ENCODE measurements at regions of chr5 and their contacts with region 1.

Region 1: GRCh38 chr5:52799983-52800393 is 12.3 kb downstream of the ITGA1 start:
- DNase-seq: peak; percentile 95
- ATAC-seq: peak; percentile 91
- H3K4me3 ChIP-seq: peak overlapping the region; percentile 67 to 93 (median 89)
- H3K4me3 Mint-ChIP-seq: peak overlapping the region; percentile 95
- H3K27ac ChIP-seq: peak overlapping the region; percentile 56 to 65
- H3K27ac Mint-ChIP-seq: peak overlapping the region; percentile 93
- H3K4me1 ChIP-seq: peaks cover 23 to 25% of the 10 kb centered on the region in 2 donors
- H3K4me1 Mint-ChIP-seq: peaks cover 48% of the 10 kb centered on the region
- H3K27me3 ChIP-seq: no peaks in the 10 kb centered on the region
- H3K27me3 Mint-ChIP-seq: no peaks in the 10 kb centered on the region
- CTCF ChIP-seq: no peak

Region 2: DNA sequence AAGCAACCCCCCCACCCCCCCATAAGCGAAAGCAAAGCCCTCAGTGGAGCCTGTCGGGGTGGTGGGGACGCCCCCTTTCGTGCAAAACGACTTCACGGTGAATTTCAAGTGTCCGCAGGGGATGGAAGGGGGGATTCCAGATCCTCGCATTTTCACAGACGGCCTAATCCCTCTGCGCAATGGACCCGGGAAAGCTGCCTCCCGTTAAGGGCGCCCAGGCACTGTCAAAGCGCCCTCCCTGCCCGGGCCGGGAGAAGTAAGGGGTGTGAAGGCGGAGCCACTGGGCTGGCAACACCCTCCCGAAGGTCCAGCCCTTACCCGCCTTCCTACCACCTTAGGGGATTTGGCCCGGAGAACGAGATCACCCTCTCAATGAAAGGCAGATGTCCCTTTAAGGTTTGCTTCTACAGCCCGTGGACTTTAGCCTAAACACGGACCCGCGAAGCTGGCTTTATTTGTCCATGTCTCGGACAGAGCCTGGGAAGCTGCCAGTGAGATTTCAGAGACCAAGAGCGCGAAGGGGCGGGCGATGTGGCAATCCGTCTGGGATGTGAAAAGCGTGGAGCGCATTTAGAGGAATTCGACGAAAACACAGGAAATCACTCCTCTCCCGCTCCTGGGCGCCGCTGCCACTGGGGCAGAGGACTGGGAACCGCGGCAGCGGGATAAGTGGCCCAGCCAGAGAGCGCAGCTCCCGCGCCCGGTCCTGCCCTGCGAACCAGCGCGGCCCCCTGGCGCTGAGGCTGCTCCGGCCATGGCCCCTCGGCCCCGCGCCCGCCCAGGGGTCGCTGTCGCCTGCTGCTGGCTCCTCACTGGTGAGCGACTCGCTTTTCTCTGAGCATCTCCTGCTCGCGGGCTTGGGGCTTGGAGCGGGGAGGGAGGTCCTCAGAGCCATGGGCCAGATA is 12.1 kb before region 1 on chr5 and contains the starts of genes ITGA1 and PELO:
- CTCF ChIA-PET with region 1: interaction called, 13 read pairs
- POLR2A ChIA-PET with region 1: interaction called, 4 read pairs
- intact Hi-C with region 1: loop called (anchors 1 kb)
- DNase-seq: peak; percentile 54
- ATAC-seq: peak; percentile 76
- H3K4me3 ChIP-seq: peak within 1 kb of the TSS; percentile 41 to 79 (median 64)
- H3K4me3 Mint-ChIP-seq: peak within 1 kb of the TSS; percentile 87
- H3K27ac ChIP-seq: no peak within 1 kb of the TSS
- H3K27ac Mint-ChIP-seq: no peak within 1 kb of the TSS
- H3K4me1 ChIP-seq: peaks cover 13 to 17% of the 10 kb centered on the region in 2 donors
- H3K4me1 Mint-ChIP-seq: peaks cover 19% of the 10 kb centered on the region
- H3K27me3 ChIP-seq: peaks cover 0 to 45% (median 32%) of the 10 kb centered on the region in 4 experiments
- H3K27me3 Mint-ChIP-seq: peaks cover 46% of the 10 kb centered on the region
- CTCF ChIP-seq: peak; percentile 7
- total RNA-seq, gene ITGA1: 0.05 and 0.74 TPM in 2 replicates
- total RNA-seq, gene PELO: 5.8 and 6.4 TPM in 2 replicates

Region 3: GRCh38 chr5:53109443-53110127 is 309.6 kb after region 1 on chr5 and contains the start of gene MOCS2:
- CTCF ChIA-PET with region 1: no interaction called
- POLR2A ChIA-PET with region 1: no interaction called
- intact Hi-C with region 1: loop called (anchors 1 kb)
- DNase-seq: peak; percentile 93
- ATAC-seq: peak; percentile 96
- H3K4me3 ChIP-seq: peak within 1 kb of the TSS; percentile 65 to 84 (median 79)
- H3K4me3 Mint-ChIP-seq: peak within 1 kb of the TSS; percentile 98
- H3K27ac ChIP-seq: peak within 1 kb of the TSS; percentile 71 to 78
- H3K27ac Mint-ChIP-seq: peak within 1 kb of the TSS; percentile 92
- H3K4me1 ChIP-seq: peaks cover 9 to 11% of the 10 kb centered on the region in 2 donors
- H3K4me1 Mint-ChIP-seq: peaks cover 44% of the 10 kb centered on the region
- H3K27me3 ChIP-seq: no peaks in the 10 kb centered on the region
- H3K27me3 Mint-ChIP-seq: no peaks in the 10 kb centered on the region
- CTCF ChIP-seq: no peak
- total RNA-seq, gene MOCS2: 14.9 and 15.3 TPM in 2 replicates

Measured in B cell (primary cell).